ENCODE measurements at regions of chr13 and their contacts with region 1.

Region 1: DNA sequence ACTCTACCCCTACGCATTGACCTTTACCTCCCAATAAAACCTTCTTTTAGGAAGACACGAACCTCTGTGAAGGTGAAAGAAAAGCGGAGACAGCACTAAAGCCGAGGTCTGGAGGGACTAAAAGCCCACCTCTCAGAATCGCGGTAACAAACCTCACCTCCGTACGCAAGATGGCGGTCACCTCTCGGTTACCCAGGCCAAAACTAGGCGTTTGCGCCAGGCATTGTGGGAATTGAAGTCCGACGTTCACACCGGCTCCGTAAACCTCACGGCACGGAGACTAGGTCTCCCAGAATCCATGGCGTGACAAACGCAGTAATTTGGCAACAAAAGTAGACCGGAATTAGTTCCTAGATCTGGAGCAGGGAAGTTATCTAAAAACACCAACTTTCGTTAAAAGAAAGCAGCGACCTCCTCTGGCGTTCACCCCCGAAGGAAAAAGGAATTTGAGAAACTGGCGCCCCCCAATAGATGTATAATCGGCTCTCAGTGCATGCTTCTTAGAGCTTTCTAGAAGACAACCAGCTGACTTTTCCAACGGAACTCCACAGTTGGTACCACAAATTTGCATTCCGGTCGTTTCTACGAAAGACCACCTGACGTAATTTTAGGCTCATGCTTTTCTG is at the start of gene N4BP2L2:
- DNase-seq: peak; percentile 99
- H3K4me3 ChIP-seq: peak within 1 kb of the TSS; percentile 75 to 94 (median 83)
- H3K27ac ChIP-seq: peak within 1 kb of the TSS; percentile 84
- H3K4me1 ChIP-seq: peaks cover 19% of the 10 kb centered on the region
- H3K27me3 ChIP-seq: peaks cover 3 to 5% of the 10 kb centered on the region in 2 experiments
- CTCF ChIP-seq: peak; percentile 18 to 41
- POLR2A ChIP-seq: peak; percentile 67
- total RNA-seq, gene N4BP2L2: 95.4 and 101 TPM in 2 replicates

Region 2: DNA sequence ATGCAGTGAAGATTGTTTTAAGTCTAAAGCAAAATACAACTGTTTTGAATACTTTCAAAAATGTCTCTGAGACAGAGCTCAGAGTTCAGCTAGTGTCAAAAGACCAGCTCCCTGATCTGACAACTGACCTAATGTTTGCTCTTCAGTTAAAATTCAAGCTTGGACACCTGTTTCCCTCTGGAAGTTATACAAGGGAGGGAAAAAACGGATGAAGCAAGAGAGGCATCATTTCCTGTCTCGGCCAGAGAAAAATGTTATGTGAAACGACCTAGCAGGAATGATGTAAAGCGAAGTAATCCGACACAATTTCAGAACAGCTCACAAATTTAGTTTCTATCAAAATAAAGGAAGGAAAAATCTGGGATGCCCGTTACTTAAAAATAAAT is 283.0 kb before region 1 on chr13:
- CTCF ChIA-PET with region 1: no interaction called
- POLR2A ChIA-PET with region 1: no interaction called
- dilution Hi-C with region 1: no loop called
- intact Hi-C with region 1: loop called (anchors 2 kb)
- DNase-seq: peak; percentile 85
- H3K4me3 ChIP-seq: peak overlapping the region in 1 of 3 experiments; percentile 30
- H3K27ac ChIP-seq: peak overlapping the region; percentile 69
- H3K4me1 ChIP-seq: peaks cover 45% of the 10 kb centered on the region
- H3K27me3 ChIP-seq: no peaks in the 10 kb centered on the region
- CTCF ChIP-seq: no peak
- POLR2A ChIP-seq: no peak

Region 3: GRCh38 chr13:32315238-32316027 is 223.3 kb before region 1 on chr13 and contains the starts of genes BRCA2 and ZAR1L:
- CTCF ChIA-PET with region 1: no interaction called
- POLR2A ChIA-PET with region 1: no interaction called
- dilution Hi-C with region 1: no loop called
- intact Hi-C with region 1: loop called (anchors 10 kb)
- DNase-seq: peak; percentile 86
- H3K4me3 ChIP-seq: peak within 1 kb of the TSS; percentile 37 to 96 (median 56)
- H3K27ac ChIP-seq: peak within 1 kb of the TSS; percentile 88
- H3K4me1 ChIP-seq: peaks cover 14% of the 10 kb centered on the region
- H3K27me3 ChIP-seq: no peaks in the 10 kb centered on the region
- CTCF ChIP-seq: no peak
- POLR2A ChIP-seq: peak; percentile 53
- total RNA-seq, gene BRCA2: 16.1 and 17.5 TPM in 2 replicates
- total RNA-seq, gene ZAR1L: not detected in 2 replicates

Region 4: DNA sequence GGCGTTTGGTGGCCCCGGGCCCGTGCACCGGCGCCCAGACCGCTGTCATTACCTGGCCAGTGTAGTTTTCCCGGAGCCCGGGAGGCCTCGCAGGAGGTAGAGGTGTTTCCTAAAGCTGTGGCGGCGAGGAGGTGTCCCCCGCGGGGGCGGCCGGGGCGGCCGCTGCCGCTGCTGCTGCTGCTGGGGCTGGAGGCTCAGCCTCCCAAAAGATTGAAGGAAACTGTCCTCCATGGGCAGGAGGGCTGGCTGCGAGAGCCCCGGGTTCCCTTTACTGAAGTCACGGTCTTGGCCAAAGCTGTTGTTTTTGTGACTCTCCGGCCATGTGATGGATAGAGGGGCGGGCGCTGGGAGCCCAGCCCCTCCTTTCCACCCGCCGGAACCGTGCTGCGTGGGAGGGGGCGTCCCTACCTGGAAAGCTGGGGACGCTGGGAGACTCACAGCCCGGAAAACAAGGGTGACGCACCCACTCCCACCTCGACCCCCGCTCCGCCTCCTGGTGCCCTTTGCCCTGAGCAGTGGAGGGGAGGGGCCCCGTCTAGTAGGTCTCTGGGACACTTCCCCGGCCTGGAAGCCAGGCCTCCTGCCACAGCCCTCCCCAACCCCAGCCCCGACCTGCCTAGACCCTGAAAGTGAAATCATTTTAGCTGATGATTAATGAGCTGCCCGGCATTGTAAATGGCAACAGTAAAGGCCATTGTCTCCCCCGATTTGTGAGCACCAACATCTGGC is 110.7 kb before region 1 on chr13 and contains the start of gene N4BP2L1:
- CTCF ChIA-PET with region 1: no interaction called
- POLR2A ChIA-PET with region 1: no interaction called
- dilution Hi-C with region 1: no loop called
- intact Hi-C with region 1: loop called (anchors 5 kb)
- DNase-seq: peak; percentile 56
- H3K4me3 ChIP-seq: peak within 1 kb of the TSS; percentile 48 to 79 (median 62)
- H3K27ac ChIP-seq: no peak within 1 kb of the TSS
- H3K4me1 ChIP-seq: peaks cover 13% of the 10 kb centered on the region
- H3K27me3 ChIP-seq: no peaks in the 10 kb centered on the region
- CTCF ChIP-seq: no peak
- POLR2A ChIP-seq: no peak
- total RNA-seq, gene N4BP2L1: 1.8 and 2.1 TPM in 2 replicates

Region 5: DNA sequence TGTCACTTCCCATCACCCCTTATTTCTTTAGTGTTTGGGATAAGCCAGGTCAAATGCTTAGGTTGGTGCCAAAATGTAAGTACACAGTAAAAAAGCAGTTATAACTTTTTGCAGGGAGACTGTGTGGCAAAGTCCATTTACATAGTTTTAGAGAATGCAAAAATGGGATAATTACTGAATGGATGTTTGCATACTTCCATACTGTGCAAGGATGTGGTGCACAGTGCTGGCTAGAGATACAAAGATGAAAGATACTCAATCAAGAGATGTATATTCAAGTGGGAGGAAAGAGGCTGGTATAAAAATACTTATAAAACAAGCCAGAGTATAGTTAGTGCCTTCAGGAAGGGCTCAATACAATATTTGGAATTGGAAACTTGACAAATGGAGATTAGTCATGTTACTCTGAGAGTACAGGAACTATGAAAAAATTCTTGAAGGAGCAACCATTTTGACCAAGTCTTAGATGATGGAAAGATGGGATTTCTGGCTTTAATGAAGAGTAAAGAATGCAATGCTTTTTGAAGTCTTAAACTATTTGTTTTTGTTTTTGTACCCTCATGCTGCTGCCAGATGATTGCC is 55.5 kb after region 1 on chr13:
- CTCF ChIA-PET with region 1: no interaction called
- POLR2A ChIA-PET with region 1: no interaction called
- dilution Hi-C with region 1: no loop called
- intact Hi-C with region 1: no loop called
- DNase-seq: peak; percentile 13
- H3K4me3 ChIP-seq: no peak overlapping the region
- H3K27ac ChIP-seq: no peak overlapping the region
- H3K4me1 ChIP-seq: peaks cover 6% of the 10 kb centered on the region
- H3K27me3 ChIP-seq: no peaks in the 10 kb centered on the region
- CTCF ChIP-seq: no peak
- POLR2A ChIP-seq: no peak

Region 6: GRCh38 chr13:32695602-32696250 is 157.0 kb after region 1 on chr13:
- CTCF ChIA-PET with region 1: no interaction called
- POLR2A ChIA-PET with region 1: no interaction called
- dilution Hi-C with region 1: no loop called
- intact Hi-C with region 1: no loop called
- DNase-seq: no peak
- H3K4me3 ChIP-seq: no peak overlapping the region
- H3K27ac ChIP-seq: no peak overlapping the region
- H3K4me1 ChIP-seq: no peaks in the 10 kb centered on the region
- H3K27me3 ChIP-seq: no peaks in the 10 kb centered on the region
- CTCF ChIP-seq: no peak
- POLR2A ChIP-seq: no peak

Measured in endothelial cell of umbilical vein (primary cell).